ENCODE measurements at regions of chr5 and their contacts with region 1.

Region 1: DNA sequence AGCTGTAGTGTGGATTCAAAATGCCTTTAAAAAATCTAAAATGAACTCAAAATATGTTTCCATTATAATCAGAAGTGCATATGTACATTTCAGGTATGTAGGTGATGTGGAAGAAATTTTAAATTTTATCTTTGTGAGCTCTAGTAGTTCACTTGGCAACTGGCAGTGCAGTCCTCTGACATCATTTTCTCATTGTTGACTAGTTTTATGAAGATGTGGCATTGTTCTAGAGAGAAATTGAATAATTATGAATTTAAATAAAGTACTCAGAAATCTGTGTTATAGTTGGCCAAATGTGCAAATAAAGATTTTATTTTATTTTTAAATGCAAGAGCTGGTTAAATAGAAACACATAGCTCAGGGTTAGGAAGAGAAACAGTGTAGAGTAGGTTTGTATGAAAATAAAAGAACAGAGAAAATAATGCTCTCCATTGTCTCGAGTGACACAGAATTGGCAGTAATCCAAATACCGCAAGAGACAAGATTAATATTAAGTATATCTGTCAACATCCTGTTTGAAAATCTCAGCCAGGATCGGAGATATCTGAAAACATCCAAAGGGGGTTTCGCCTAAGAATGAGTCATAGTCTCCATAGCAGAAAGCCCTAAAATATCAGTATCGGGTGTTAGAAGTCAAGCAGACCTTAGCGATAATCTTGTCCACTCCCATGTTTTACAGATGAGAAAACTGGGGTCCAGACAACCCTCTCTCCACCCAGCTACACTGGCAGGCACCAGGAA is 189.4 kb downstream of the CCDC192 start:
- DNase-seq: peak in 1 of 2 donors; percentile 6
- ATAC-seq: peak in 5 of 8 donors; percentile 34 to 67 (median 50)
- H3K4me3 ChIP-seq: peak overlapping the region in 1 of 10 donors; percentile 2
- H3K27ac ChIP-seq: peak overlapping the region in 4 of 10 donors; percentile 9 to 57 (median 28)
- H3K4me1 ChIP-seq: peaks cover 0 to 25% (median 14%) of the 10 kb centered on the region in 9 donors
- H3K27me3 ChIP-seq: no peaks in the 10 kb centered on the region
- CTCF ChIP-seq: no peak

Region 2: GRCh38 chr5:127941646-127942045 is 49.0 kb after region 1 on chr5:
- intact Hi-C with region 1: no loop called
- DNase-seq: no peak
- ATAC-seq: peak in 7 of 8 donors; percentile 31 to 69 (median 51)
- H3K4me3 ChIP-seq: peak overlapping the region in 3 of 10 donors; percentile 5 to 16 (median 15)
- H3K27ac ChIP-seq: peak overlapping the region in 6 of 10 donors; percentile 33 to 79 (median 65)
- H3K4me1 ChIP-seq: peaks cover 0 to 14% (median 0%) of the 10 kb centered on the region in 9 donors
- H3K27me3 ChIP-seq: no peaks in the 10 kb centered on the region
- CTCF ChIP-seq: no peak

Region 3: GRCh38 chr5:127959152-127959764 is 66.6 kb after region 1 on chr5:
- intact Hi-C with region 1: loop called in 1 of 10 experiments (anchors 5 kb)
- DNase-seq: peak; percentile 65 to 75
- ATAC-seq: peak in 7 of 8 donors; percentile 34 to 70 (median 47)
- H3K4me3 ChIP-seq: no peak overlapping the region
- H3K27ac ChIP-seq: peak overlapping the region in 8 of 10 donors; percentile 6 to 81 (median 60)
- H3K4me1 ChIP-seq: peaks cover 22 to 73% (median 40%) of the 10 kb centered on the region in 9 donors
- H3K27me3 ChIP-seq: no peaks in the 10 kb centered on the region
- CTCF ChIP-seq: no peak

Region 4: GRCh38 chr5:127969002-127969401 is 76.4 kb after region 1 on chr5:
- intact Hi-C with region 1: loop called in 2 of 10 experiments (anchors 2 to 5 kb)
- DNase-seq: no peak
- ATAC-seq: peak in 4 of 8 donors; percentile 30 to 48 (median 34)
- H3K4me3 ChIP-seq: no peak overlapping the region
- H3K27ac ChIP-seq: no peak overlapping the region
- H3K4me1 ChIP-seq: peaks cover 0 to 28% (median 6%) of the 10 kb centered on the region in 9 donors
- H3K27me3 ChIP-seq: no peaks in the 10 kb centered on the region
- CTCF ChIP-seq: no peak